Activated CD8-positive, alpha-beta T cell treated with anti-CD3 and anti-CD28 coated beads, Interleukin-2, amount 10 ng/mL, durations not matched to agents 7 days and 5 days (primary cell): ENCODE measurements at regions of chr1 and their contacts with region 1.

Region 1: DNA sequence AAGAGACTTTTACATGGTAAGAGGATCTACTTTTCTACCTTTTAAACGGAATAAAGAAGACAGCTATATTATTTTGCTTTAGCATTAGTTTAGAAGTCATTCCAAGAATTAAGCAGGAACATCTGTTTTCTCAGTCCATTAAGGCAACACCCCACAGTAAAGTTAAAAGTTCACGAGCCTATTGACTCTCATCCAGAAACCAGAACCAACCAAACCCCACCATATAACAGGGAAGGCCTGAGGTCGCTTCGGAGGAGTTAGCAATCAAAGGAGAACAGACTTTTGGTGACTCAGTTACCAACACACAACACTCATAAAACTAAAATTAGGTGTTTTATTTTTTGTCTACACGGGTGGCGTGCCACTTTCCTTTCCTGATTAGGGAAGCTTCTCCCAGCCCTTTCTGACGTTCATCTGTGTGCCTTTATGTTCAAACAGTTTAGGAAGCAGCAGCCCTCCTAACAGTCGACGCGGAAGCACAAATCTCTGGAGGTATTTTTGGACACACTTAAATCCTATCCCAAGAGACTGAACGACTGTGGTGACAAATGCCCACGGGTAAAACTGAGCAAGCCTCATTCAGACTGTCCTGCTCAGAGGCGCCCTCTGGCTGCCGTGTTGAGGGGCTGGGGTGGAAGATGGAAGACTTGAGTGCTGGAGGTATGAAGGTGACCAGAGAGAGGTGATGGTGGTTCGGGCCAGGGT is 8.6 kb upstream of the PLA2G2C start:
- DNase-seq: peak; percentile 79
- ATAC-seq: peak; percentile 76
- H3K4me3 Mint-ChIP-seq: no peak overlapping the region
- H3K27ac Mint-ChIP-seq: no peak overlapping the region
- H3K4me1 Mint-ChIP-seq: no peaks in the 10 kb centered on the region
- H3K27me3 Mint-ChIP-seq: peaks cover 40% of the 10 kb centered on the region

Region 2: DNA sequence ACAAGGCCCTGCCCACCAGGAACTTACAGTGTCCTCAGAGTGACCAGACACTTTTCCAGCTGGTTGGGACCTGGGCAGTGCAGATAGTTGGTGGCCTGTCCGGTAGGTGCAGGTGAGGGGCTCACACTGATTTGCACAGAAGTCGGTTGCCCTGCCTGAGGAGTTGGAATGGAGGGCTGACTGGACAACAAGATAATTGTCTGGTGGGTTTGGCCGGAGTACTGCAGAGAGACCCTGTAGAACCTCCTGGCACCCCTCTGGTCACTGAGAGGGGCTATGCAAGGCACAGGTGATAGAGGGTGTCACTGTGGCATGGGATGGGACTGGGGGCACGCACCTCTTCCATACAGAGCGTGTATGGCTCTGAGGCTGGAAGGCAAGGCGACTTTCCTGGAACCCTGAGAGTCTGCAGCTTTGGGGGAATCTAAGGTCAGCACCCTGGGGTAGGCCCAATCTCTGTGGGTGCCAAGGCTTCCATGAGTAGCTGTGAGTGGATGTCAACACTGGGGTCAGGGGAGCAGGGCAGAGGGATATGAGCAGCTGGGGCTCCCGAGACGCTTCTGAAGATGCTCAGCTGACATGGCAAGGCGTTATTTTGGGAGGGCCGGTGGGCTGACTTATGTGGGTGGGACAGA is 68.0 kb before region 1 on chr1:
- CTCF ChIA-PET with region 1: no interaction called
- POLR2A ChIA-PET with region 1: no interaction called
- DNase-seq: no peak
- ATAC-seq: no peak
- H3K4me3 Mint-ChIP-seq: no peak overlapping the region
- H3K27ac Mint-ChIP-seq: no peak overlapping the region
- H3K4me1 Mint-ChIP-seq: no peaks in the 10 kb centered on the region
- H3K27me3 Mint-ChIP-seq: peaks cover 5% of the 10 kb centered on the region

Region 3: GRCh38 chr1:20151906-20152598 is 42.9 kb before region 1 on chr1:
- CTCF ChIA-PET with region 1: interaction called, 19 read pairs
- POLR2A ChIA-PET with region 1: no interaction called
- DNase-seq: peak; percentile 85
- ATAC-seq: peak; percentile 93
- H3K4me3 Mint-ChIP-seq: peak overlapping the region; percentile 61
- H3K27ac Mint-ChIP-seq: peak overlapping the region; percentile 80
- H3K4me1 Mint-ChIP-seq: peaks cover 19% of the 10 kb centered on the region
- H3K27me3 Mint-ChIP-seq: no peaks in the 10 kb centered on the region

Region 4: DNA sequence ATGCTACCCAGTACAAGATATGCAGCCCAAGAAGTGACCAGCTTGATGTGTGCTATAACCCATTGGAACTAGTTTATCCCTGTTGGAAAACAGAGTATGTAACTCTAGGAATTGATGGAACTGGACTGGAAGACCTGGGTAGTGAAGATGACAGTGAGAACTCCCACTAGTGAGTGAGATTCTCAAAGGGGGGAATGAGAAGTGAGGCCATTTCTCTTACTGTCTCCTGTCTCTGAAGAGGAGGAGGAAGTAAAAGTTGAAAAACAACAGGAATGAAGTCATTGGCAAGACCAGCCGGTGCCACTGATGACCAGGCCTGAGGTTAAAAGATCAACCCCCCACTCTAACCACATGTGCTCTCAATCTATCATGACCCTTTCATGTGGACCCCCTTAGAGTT is 34.9 kb before region 1 on chr1:
- CTCF ChIA-PET with region 1: interaction called, 61 read pairs
- POLR2A ChIA-PET with region 1: no interaction called
- DNase-seq: no peak
- ATAC-seq: no peak
- H3K4me3 Mint-ChIP-seq: no peak overlapping the region
- H3K27ac Mint-ChIP-seq: no peak overlapping the region
- H3K4me1 Mint-ChIP-seq: no peaks in the 10 kb centered on the region
- H3K27me3 Mint-ChIP-seq: peaks cover 4% of the 10 kb centered on the region

Region 5: GRCh38 chr1:20165522-20165951 is 29.4 kb before region 1 on chr1:
- CTCF ChIA-PET with region 1: interaction called, 61 read pairs
- POLR2A ChIA-PET with region 1: no interaction called
- DNase-seq: peak; percentile 30
- ATAC-seq: no peak
- H3K4me3 Mint-ChIP-seq: no peak overlapping the region
- H3K27ac Mint-ChIP-seq: no peak overlapping the region
- H3K4me1 Mint-ChIP-seq: no peaks in the 10 kb centered on the region
- H3K27me3 Mint-ChIP-seq: peaks cover 12% of the 10 kb centered on the region

Region 6: DNA sequence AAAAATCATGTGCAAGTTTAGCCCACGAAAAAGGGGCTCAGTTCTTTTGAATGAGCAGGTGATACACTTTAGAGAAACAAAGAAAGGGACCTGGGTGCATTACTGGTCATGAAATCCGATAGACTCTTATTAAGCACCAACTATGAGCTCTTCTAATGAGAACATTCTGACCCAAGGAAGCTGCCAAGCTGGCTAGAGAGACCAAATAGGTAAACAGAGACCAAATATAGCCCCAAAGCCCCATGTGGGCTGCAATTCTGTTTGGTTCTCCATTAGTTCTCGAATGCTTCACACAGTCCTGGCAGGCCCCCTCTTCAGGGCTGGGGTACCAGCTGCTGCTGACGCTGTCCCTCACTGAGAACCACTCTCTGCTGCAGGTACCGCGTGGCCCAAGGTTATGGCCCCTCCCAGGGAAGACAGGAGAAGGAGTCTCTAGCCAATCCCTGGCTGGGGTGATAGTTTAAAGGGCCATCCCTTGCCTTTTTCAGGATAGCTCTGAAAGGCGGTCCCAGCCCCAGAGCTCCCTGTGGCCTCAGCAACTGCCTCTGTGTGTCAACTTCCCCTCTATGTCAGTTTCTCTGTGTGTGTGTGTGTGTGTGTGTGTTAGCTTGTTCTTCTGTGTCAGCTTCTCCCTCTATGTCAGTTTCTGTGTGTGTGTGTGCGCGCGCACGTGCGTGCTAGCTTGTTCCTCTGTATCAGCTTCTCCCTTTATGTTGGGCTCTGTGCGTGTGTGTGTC is 16.1 kb before region 1 on chr1:
- CTCF ChIA-PET with region 1: interaction called, 31 read pairs
- POLR2A ChIA-PET with region 1: interaction called, 3 read pairs
- DNase-seq: no peak
- ATAC-seq: no peak
- H3K4me3 Mint-ChIP-seq: no peak overlapping the region
- H3K27ac Mint-ChIP-seq: no peak overlapping the region
- H3K4me1 Mint-ChIP-seq: peaks cover 14% of the 10 kb centered on the region
- H3K27me3 Mint-ChIP-seq: peaks cover 21% of the 10 kb centered on the region

Region 7: GRCh38 chr1:20207419-20207959 is 12.6 kb after region 1 on chr1:
- CTCF ChIA-PET with region 1: interaction called, 10 read pairs
- POLR2A ChIA-PET with region 1: no interaction called
- DNase-seq: no peak
- ATAC-seq: no peak
- H3K4me3 Mint-ChIP-seq: no peak overlapping the region
- H3K27ac Mint-ChIP-seq: no peak overlapping the region
- H3K4me1 Mint-ChIP-seq: peaks cover 2% of the 10 kb centered on the region
- H3K27me3 Mint-ChIP-seq: peaks cover 21% of the 10 kb centered on the region

Region 8: GRCh38 chr1:20212685-20213331 is 17.9 kb after region 1 on chr1:
- CTCF ChIA-PET with region 1: interaction called, 13 read pairs
- POLR2A ChIA-PET with region 1: no interaction called
- DNase-seq: peak; percentile 53
- ATAC-seq: peak; percentile 73
- H3K4me3 Mint-ChIP-seq: no peak overlapping the region
- H3K27ac Mint-ChIP-seq: no peak overlapping the region
- H3K4me1 Mint-ChIP-seq: peaks cover 6% of the 10 kb centered on the region
- H3K27me3 Mint-ChIP-seq: peaks cover 30% of the 10 kb centered on the region